ENCODE measurements at regions of chr3 and their contacts with region 1.

Region 1: GRCh38 chr3:196528639-196529233 is 13.6 kb upstream of the SMCO1 start:
- DNase-seq: peak; percentile 45 to 93
- H3K4me3 ChIP-seq: no peak overlapping the region
- CTCF ChIP-seq: no peak
- POLR2A ChIP-seq: no peak

Region 2: DNA sequence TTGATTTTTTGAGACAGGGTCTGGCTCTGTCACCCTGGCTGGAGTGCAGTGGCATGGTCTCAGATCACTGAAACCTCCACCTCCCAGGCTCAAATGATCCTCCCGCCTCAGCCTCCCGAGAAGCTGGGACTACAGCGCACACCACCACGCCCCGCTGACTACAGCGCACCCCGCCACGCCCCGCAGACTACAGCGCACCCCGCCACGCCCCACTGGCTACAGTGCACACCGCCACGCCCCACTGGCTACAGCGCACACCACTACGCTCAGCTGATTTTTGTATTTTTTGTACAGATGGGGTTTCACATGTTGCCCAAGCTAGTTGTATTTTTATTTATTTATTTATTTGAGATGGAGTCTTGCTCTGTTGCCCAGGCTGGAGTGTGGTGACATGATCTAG is 276.8 kb before region 1 on chr3:
- intact Hi-C with region 1: loop called (anchors 10 kb)
- DNase-seq: no peak
- H3K4me3 ChIP-seq: no peak overlapping the region
- CTCF ChIP-seq: no peak
- POLR2A ChIP-seq: no peak

Region 3: GRCh38 chr3:196378146-196378841 is 150.4 kb before region 1 on chr3:
- intact Hi-C with region 1: no loop called
- DNase-seq: no peak
- H3K4me3 ChIP-seq: no peak overlapping the region
- CTCF ChIP-seq: no peak
- POLR2A ChIP-seq: no peak

Region 4: DNA sequence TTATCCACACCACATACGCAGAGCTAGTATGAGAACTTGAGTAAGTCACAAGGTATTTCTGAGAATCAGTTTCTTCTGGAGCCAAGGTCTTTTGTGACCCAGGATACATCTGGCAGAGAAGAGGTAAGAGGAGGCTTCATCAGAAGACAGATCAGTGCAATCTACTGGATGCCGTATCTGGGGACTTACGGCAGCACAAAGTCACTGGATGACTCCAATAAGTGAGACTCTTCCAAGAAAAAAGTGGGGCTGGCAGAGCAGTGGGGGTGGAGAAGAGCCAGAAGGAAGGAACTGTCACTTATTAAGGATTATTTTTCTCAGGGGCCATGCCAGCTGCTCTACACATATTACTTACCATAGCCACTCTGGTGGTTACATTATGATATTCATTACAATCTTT is 64.9 kb before region 1 on chr3:
- intact Hi-C with region 1: no loop called
- DNase-seq: no peak
- H3K4me3 ChIP-seq: no peak overlapping the region
- CTCF ChIP-seq: no peak
- POLR2A ChIP-seq: no peak